Panc1 (cell line): ENCODE measurements at regions of chr11 and their contacts with region 1.

Region 1: DNA sequence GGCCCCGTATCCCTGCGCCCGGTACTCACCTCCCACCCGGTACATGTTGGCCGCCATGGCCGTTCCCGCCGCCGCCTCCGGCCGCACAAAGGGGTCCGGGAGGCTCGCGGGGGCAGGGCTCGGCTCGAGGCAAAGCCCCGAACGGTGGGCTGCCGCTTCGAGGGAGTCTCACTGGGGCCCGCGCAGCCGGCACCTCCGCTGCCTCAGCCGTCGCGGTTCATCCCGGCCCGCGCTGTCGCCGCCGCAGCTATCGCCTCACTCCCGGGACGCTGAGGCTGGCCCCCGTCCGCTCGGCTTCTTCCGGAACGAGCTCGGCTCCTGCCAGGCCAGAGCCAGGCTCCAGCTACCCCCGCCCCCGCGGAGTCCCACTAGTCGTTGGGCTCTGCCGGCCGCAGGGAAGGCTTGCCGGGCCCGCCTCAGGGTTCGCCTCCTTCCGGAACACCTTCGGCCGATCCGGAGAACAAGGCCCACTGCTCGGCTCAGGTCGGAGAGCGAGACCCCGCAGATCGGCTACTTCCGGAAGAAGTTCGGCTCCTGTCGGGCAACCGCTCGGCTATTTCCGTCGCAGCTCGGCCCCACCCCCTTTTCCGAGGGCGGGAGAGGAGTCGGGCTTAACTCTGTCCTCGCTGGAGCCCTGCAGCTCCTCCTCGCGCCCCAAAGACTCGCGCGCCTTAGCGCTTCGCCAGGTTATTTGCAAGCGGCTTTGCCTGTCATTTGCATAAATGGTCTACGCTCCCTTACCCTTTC is at the start of gene MTA2:
- DNase-seq: peak; percentile 84
- ATAC-seq: peak; percentile 94
- H3K4me3 ChIP-seq: peak within 1 kb of the TSS; percentile 70 to 76
- H3K27ac ChIP-seq: peak within 1 kb of the TSS; percentile 98
- H3K4me1 ChIP-seq: peaks cover 26% of the 10 kb centered on the region
- H3K27me3 ChIP-seq: no peaks in the 10 kb centered on the region
- CTCF ChIP-seq: no peak
- total RNA-seq, gene MTA2: 163 TPM

Region 2: GRCh38 chr11:61871158-61871597 is 730.4 kb before region 1 on chr11:
- CTCF ChIA-PET with region 1: no interaction called
- POLR2A ChIA-PET with region 1: no interaction called
- in situ Hi-C with region 1: no loop called
- intact Hi-C with region 1: no loop called
- DNase-seq: peak; percentile 25
- ATAC-seq: peak; percentile 95
- H3K4me3 ChIP-seq: peak overlapping the region in 1 of 2 experiments; percentile 40; a peak in 2 of 4 replicates
- H3K27ac ChIP-seq: peak overlapping the region; percentile 48; the same call in 1 of the 2 replicates
- H3K4me1 ChIP-seq: peaks cover 13% of the 10 kb centered on the region
- H3K27me3 ChIP-seq: no peaks in the 10 kb centered on the region
- CTCF ChIP-seq: peak; percentile 97

Region 3: GRCh38 chr11:62419314-62419929 is 182.1 kb before region 1 on chr11:
- CTCF ChIA-PET with region 1: no interaction called
- POLR2A ChIA-PET with region 1: no interaction called
- in situ Hi-C with region 1: no loop called
- intact Hi-C with region 1: no loop called
- DNase-seq: no peak
- ATAC-seq: no peak
- H3K4me3 ChIP-seq: no peak overlapping the region
- H3K27ac ChIP-seq: peak overlapping the region; percentile 62
- H3K4me1 ChIP-seq: peaks cover 21% of the 10 kb centered on the region
- H3K27me3 ChIP-seq: no peaks in the 10 kb centered on the region
- CTCF ChIP-seq: no peak

Region 4: GRCh38 chr11:62645956-62646824 is 44.6 kb after region 1 on chr11 and contains the start of gene GANAB:
- CTCF ChIA-PET with region 1: no interaction called
- POLR2A ChIA-PET with region 1: interaction called, 13 read pairs
- in situ Hi-C with region 1: no loop called
- intact Hi-C with region 1: no loop called
- DNase-seq: peak; percentile 80
- ATAC-seq: peak; percentile 98
- H3K4me3 ChIP-seq: peak within 1 kb of the TSS; percentile 69 to 92
- H3K27ac ChIP-seq: peak within 1 kb of the TSS; percentile 80
- H3K4me1 ChIP-seq: peaks cover 21% of the 10 kb centered on the region
- H3K27me3 ChIP-seq: no peaks in the 10 kb centered on the region
- CTCF ChIP-seq: no peak
- total RNA-seq, gene GANAB: 415 TPM